ENCODE measurements at regions of chr11 and their contacts with region 1.

Region 1: DNA sequence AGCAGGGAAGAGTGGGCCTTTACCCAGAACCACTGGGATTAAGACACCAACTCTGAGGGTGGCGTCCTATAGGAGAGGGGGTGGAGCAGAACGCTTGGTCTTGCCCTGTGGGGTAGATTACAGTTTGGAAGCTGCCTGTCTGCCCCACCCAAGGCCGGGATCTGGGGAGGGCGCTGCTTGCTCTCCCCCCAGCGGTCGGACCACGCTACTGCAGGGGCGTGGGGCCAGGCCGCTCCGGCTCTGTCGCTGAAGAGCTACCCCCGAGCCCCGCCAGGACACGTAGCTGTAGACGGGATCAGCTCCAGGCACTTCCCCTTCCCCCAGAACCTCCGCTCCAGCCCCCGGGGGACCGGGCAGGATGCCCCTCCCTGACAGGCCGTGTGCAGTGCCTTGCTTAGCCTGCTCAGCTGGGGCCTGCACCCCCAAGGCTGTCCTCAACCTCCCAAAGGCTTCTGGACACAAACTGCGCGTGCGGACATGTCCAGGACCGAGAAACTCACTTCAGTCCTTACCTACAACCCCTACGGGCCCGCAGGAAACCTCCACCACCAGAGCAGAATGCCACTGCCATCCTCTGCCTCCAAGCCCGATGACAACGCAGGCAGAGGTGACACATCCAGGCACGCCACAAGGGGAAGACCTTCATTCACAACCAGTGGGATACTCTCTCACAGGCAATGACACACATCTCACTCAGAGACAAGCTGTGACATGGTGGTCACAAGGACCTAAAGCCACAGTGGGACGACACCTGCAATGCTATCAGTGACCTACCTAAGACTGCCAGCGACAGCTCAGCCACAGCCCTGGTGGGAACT is 3.6 kb downstream of the AHNAK start:
- DNase-seq: peak; percentile 94
- H3K4me3 ChIP-seq: peak overlapping the region; percentile 80 to 100 (median 95)
- H3K27ac ChIP-seq: peak overlapping the region; percentile 96 to 100 (median 98)
- H3K4me1 ChIP-seq: peaks cover 0 to 74% (median 56%) of the 10 kb centered on the region in 4 donors
- H3K27me3 ChIP-seq: no peaks in the 10 kb centered on the region
- CTCF ChIP-seq: peak; percentile 98 to 100 (median 99)
- EP300 ChIP-seq: no peak
- POLR2A ChIP-seq: no peak

Region 2: DNA sequence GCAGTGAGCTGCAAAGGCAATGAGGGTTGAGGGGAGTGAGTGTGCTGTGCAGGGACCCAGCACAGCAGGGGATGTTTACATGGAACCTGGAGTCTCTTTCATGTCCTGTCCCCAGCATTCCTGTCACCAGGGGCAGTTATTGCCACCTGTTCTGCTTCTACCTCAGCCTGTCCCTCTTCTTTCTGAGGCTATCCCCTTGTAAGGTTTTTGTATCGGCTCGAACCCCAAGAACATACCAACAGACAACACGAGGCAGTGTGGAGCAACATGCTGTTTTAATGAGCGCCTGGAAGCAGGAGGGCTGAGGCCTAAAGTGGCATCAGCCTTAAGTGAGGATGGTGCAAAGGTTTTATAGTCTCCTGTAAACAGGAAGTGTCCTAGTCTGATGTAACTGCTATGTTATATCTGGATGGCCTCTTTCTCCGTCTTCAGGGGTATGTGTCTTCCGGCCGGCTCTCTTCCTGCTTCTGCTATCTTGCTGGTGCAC is 269.1 kb before region 1 on chr11:
- intact Hi-C with region 1: no loop called
- DNase-seq: no peak
- H3K4me3 ChIP-seq: no peak overlapping the region
- H3K27ac ChIP-seq: no peak overlapping the region
- H3K4me1 ChIP-seq: no peaks in the 10 kb centered on the region
- H3K27me3 ChIP-seq: no peaks in the 10 kb centered on the region
- CTCF ChIP-seq: no peak
- EP300 ChIP-seq: no peak
- POLR2A ChIP-seq: no peak

Region 3: DNA sequence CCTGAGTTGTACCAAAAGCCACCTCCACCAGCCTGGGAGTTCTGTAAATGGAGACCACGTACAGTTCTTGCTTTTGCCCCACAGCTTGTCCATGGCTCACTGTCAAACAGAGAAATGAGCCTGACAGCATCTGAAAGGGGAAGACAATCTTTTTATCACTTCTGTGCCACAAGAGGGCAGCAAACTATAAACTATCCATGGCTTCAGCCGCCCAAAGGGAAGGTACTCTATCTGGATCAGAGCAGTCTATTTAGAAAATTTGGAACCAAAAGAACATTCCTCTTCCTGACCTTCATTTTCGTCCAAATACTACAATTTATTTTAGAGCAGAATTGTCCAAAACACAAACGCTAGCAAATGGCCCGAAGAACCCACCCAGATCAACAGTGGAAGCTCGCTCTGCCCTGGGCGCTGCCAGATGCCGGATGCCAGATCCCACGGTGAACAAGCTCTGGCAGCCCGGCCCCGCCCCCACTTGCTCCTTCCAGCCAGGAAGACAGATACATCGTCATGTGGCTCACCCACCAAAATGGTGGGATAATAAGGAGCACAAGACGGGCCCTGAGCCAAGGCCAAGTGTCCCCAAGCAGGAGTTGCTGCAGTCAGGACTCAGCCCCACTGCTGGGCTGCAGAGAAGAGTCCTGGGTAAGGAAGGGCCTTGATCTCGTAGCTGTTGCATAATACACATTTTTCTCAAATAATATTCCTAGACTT is 148.0 kb before region 1 on chr11:
- intact Hi-C with region 1: loop called (anchors 2 kb)
- DNase-seq: peak; percentile 94
- H3K4me3 ChIP-seq: peak overlapping the region in 3 of 4 donors; percentile 29 to 41 (median 40)
- H3K27ac ChIP-seq: peak overlapping the region; percentile 82 to 95 (median 86)
- H3K4me1 ChIP-seq: peaks cover 0 to 56% (median 49%) of the 10 kb centered on the region in 4 donors
- H3K27me3 ChIP-seq: no peaks in the 10 kb centered on the region
- CTCF ChIP-seq: peak; percentile 50 to 75 (median 68)
- EP300 ChIP-seq: no peak
- POLR2A ChIP-seq: no peak

Region 4: GRCh38 chr11:62400760-62401159 is 142.2 kb before region 1 on chr11:
- intact Hi-C with region 1: loop called (anchors 2 kb)
- DNase-seq: peak; percentile 96
- H3K4me3 ChIP-seq: no peak overlapping the region
- H3K27ac ChIP-seq: peak overlapping the region; percentile 81 to 95 (median 86)
- H3K4me1 ChIP-seq: peaks cover 0 to 80% (median 79%) of the 10 kb centered on the region in 4 donors
- H3K27me3 ChIP-seq: no peaks in the 10 kb centered on the region
- CTCF ChIP-seq: no peak
- EP300 ChIP-seq: peak in 2 of 4 donors; percentile 61
- POLR2A ChIP-seq: no peak

Region 5: GRCh38 chr11:62427630-62428233 is 115.2 kb before region 1 on chr11:
- intact Hi-C with region 1: loop called (anchors 1 kb)
- DNase-seq: no peak
- H3K4me3 ChIP-seq: no peak overlapping the region
- H3K27ac ChIP-seq: peak overlapping the region; percentile 43 to 81 (median 79)
- H3K4me1 ChIP-seq: peaks cover 0 to 96% (median 81%) of the 10 kb centered on the region in 4 donors
- H3K27me3 ChIP-seq: no peaks in the 10 kb centered on the region
- CTCF ChIP-seq: no peak
- EP300 ChIP-seq: peak in 1 of 4 donors; percentile 34
- POLR2A ChIP-seq: no peak

Region 6: GRCh38 chr11:62508268-62509058 is 34.5 kb before region 1 on chr11:
- intact Hi-C with region 1: loop called (anchors 2 kb)
- DNase-seq: peak; percentile 96
- H3K4me3 ChIP-seq: peak overlapping the region in 3 of 4 donors; percentile 18 to 23 (median 19)
- H3K27ac ChIP-seq: peak overlapping the region; percentile 83 to 89 (median 88)
- H3K4me1 ChIP-seq: peaks cover 0 to 87% (median 76%) of the 10 kb centered on the region in 4 donors
- H3K27me3 ChIP-seq: no peaks in the 10 kb centered on the region
- CTCF ChIP-seq: peak; percentile 33 to 72 (median 56)
- EP300 ChIP-seq: peak in 1 of 4 donors; percentile 83
- POLR2A ChIP-seq: peak in 1 of 2 donors; percentile 36